Adrenal gland (tissue), 19 donors: ENCODE measurements at regions of chr9 and their contacts with region 1.

Region 1: GRCh38 chr9:74742792-74743730 is 144.7 kb downstream of the TRPM6 start:
- DNase-seq: peak in 6 of 7 donors; percentile 24 to 65 (median 41)
- H3K4me3 ChIP-seq: no peak overlapping the region
- H3K27ac ChIP-seq: no peak overlapping the region
- H3K4me1 ChIP-seq: peaks cover 0 to 7% of the 10 kb centered on the region in 2 donors
- H3K27me3 ChIP-seq: no peaks in the 10 kb centered on the region
- CTCF ChIP-seq: peak; percentile 57 to 73 (median 65)
- POLR2A ChIP-seq: no peak

Region 2: DNA sequence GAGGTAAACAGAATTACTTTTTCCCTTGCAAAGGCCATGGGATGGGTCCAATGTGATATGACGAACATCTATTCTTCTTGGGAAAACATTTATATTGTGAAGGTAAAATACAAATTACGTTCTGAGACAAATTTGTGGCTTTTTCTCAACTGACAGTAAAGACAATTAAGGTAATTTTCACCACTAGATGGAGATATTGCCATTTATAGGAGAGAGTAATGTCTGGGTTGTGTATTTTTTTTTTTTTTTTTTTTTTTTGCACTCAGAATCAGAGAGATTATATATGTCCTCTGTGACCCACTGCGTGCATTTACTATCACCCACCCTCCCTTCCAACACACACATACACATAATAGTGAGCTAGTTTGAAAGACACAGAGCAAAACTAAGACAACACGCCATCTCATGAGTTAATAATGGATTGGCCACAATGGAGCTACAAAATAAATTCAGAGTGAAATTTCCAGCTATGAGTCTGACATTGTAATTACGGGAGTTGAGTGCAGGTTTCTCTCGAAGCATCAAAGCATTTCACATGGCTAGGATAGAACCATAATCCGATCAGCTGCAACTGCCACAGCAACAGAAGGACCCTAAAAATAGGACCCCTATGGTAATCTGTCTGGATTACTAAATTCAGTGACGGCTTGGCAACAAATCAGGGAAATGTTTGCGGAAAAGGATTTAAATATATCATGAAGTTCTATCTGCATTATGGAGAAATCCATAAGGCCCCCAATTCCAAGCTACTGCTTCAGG is 1542.2 kb before region 1 on chr9:
- intact Hi-C with region 1: loop called in 1 of 2 experiments (anchors 5 kb)
- DNase-seq: no peak
- H3K4me3 ChIP-seq: no peak overlapping the region
- H3K27ac ChIP-seq: no peak overlapping the region
- H3K4me1 ChIP-seq: no peaks in the 10 kb centered on the region
- H3K27me3 ChIP-seq: peaks cover 6% of the 10 kb centered on the region
- CTCF ChIP-seq: peak; percentile 35 to 66 (median 49)
- POLR2A ChIP-seq: no peak

Region 3: GRCh38 chr9:74333384-74334032 is 409.6 kb before region 1 on chr9:
- intact Hi-C with region 1: no loop called
- DNase-seq: no peak
- H3K4me3 ChIP-seq: no peak overlapping the region
- H3K27ac ChIP-seq: no peak overlapping the region
- H3K4me1 ChIP-seq: no peaks in the 10 kb centered on the region
- H3K27me3 ChIP-seq: no peaks in the 10 kb centered on the region
- CTCF ChIP-seq: no peak
- POLR2A ChIP-seq: no peak

Region 4: DNA sequence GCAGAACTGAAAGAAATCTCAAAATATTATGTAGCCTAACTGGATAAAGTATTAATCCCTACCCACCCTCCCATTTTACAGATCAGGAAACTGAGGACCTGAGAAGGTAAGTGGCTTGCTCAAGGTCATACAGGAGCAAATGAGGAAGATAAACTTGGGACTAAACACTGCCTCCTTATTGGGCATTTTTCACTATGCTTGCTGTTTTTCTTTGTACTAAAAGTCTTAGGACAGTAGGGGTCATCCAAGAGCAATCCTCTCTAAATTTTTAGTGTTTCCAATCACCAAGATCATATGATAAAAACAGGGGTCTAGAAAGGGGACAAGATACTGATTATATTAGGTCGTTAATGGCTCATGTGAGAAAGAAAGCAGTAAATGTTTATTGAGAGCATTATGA is 165.1 kb before region 1 on chr9:
- intact Hi-C with region 1: loop called in 1 of 2 experiments (anchors 5 kb)
- DNase-seq: no peak
- H3K4me3 ChIP-seq: no peak overlapping the region
- H3K27ac ChIP-seq: no peak overlapping the region
- H3K4me1 ChIP-seq: no peaks in the 10 kb centered on the region
- H3K27me3 ChIP-seq: no peaks in the 10 kb centered on the region
- CTCF ChIP-seq: peak in 4 of 6 experiments; percentile 15 to 46 (median 26)
- POLR2A ChIP-seq: no peak

Region 5: GRCh38 chr9:74589576-74589975 is 153.5 kb before region 1 on chr9:
- intact Hi-C with region 1: loop called in 1 of 2 experiments (anchors 5 kb)
- DNase-seq: no peak
- H3K4me3 ChIP-seq: no peak overlapping the region
- H3K27ac ChIP-seq: no peak overlapping the region
- H3K4me1 ChIP-seq: no peaks in the 10 kb centered on the region
- H3K27me3 ChIP-seq: no peaks in the 10 kb centered on the region
- CTCF ChIP-seq: no peak
- POLR2A ChIP-seq: no peak

Region 6: GRCh38 chr9:75046725-75047345 is 303.8 kb after region 1 on chr9:
- intact Hi-C with region 1: no loop called
- DNase-seq: no peak
- H3K4me3 ChIP-seq: no peak overlapping the region
- H3K27ac ChIP-seq: no peak overlapping the region
- H3K4me1 ChIP-seq: no peaks in the 10 kb centered on the region
- H3K27me3 ChIP-seq: no peaks in the 10 kb centered on the region
- CTCF ChIP-seq: no peak
- POLR2A ChIP-seq: no peak